ENCODE measurements at regions of chr18 and their contacts with region 1.

Region 1: GRCh38 chr18:3703732-3704176 is 253.8 kb downstream of the TGIF1 start:
- DNase-seq: peak; percentile 73 to 83
- ATAC-seq: peak; percentile 69
- H3K4me3 ChIP-seq: no peak overlapping the region
- H3K27ac ChIP-seq: no peak overlapping the region
- H3K4me1 ChIP-seq: no peaks in the 10 kb centered on the region
- H3K27me3 ChIP-seq: no peaks in the 10 kb centered on the region

Region 2: DNA sequence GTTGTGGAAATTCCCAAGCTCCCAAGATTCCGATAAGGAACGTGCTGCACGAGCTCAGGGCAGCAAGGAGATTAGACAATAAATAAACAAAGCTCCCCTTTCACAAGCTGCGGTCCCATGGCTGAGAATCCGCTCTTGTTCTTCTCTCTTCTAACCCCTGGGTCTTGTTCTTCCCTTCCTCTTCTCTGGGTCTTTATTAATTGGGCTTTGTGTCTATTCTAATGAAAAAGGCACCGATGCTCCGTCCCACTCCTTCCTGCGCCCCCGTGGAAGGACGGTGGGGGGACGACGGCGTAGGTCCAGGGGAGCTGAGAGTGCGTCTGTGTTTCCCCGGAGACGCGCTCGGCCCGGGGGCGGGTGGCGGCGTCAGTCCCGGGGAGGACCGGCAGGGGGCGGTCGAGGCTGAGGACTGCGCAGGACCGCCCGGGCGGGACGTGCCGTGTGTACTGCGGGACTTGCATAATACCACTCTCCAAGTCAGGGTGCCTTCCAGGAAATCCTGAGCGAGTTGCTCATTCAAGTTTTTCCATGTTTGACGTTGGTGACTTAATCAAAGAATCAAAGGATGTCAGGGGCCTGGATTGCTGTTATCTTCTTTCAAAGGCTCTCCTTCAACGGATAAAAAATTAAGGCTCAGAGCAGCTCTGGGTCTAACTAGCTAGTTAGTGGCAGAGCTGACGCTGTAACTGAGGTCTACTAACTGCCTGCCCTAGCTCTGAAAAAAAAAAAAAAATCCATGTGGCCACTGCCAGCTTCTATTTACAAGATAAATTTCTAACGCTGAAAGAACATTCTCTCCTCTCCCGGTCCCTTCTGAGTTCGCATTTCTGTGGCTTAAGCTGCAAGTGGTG is 67.6 kb after region 1 on chr18:
- intact Hi-C with region 1: loop called in 1 of 2 experiments (anchors 2 kb)
- DNase-seq: peak; percentile 90 to 96
- ATAC-seq: peak; percentile 100
- H3K4me3 ChIP-seq: peak overlapping the region; percentile 27 to 46
- H3K27ac ChIP-seq: peak overlapping the region in 1 of 2 donors; percentile 70
- H3K4me1 ChIP-seq: no peaks in the 10 kb centered on the region
- H3K27me3 ChIP-seq: no peaks in the 10 kb centered on the region

Region 3: GRCh38 chr18:3869848-3870247 is 166.1 kb after region 1 on chr18:
- intact Hi-C with region 1: loop called (anchors 5 kb)
- DNase-seq: no peak
- ATAC-seq: peak; percentile 61
- H3K4me3 ChIP-seq: no peak overlapping the region
- H3K27ac ChIP-seq: no peak overlapping the region
- H3K4me1 ChIP-seq: no peaks in the 10 kb centered on the region
- H3K27me3 ChIP-seq: no peaks in the 10 kb centered on the region

Region 4: GRCh38 chr18:3889803-3890202 is 186.0 kb after region 1 on chr18:
- intact Hi-C with region 1: no loop called
- DNase-seq: no peak
- ATAC-seq: no peak
- H3K4me3 ChIP-seq: no peak overlapping the region
- H3K27ac ChIP-seq: no peak overlapping the region
- H3K4me1 ChIP-seq: no peaks in the 10 kb centered on the region
- H3K27me3 ChIP-seq: no peaks in the 10 kb centered on the region

Region 5: DNA sequence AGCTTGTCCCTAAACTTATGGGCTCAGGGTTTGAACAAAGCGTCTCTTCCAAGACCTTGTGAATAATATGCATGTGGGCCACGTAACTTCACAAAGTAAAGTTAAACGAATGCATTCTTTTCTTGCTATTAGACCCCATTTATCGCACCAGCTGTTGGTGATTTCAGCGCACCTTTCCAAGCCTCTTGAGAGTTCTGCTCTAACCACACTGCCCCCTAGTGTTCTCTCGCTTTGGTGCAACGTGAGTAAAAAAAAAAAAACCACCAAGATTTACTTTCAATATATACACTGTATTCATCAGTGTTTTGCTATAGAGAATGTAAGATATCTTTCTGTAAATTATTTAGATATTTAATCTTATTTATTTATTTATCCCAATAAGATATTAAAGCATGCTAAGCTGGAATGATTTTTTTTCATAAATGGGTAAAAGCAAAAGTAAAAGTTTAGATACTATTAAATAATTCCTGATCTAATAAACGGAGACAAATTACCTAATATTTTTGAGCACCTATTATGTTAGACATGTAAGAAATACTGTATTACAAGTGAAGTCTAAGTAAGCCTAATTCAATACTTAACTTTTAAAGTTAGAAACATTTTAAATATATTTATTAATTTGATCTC is 291.8 kb after region 1 on chr18:
- intact Hi-C with region 1: loop called (anchors 5 to 10 kb)
- DNase-seq: peak in 1 of 2 donors; percentile 58
- ATAC-seq: no peak
- H3K4me3 ChIP-seq: peak overlapping the region; percentile 12 to 48
- H3K27ac ChIP-seq: no peak overlapping the region
- H3K4me1 ChIP-seq: no peaks in the 10 kb centered on the region
- H3K27me3 ChIP-seq: no peaks in the 10 kb centered on the region

Region 6: DNA sequence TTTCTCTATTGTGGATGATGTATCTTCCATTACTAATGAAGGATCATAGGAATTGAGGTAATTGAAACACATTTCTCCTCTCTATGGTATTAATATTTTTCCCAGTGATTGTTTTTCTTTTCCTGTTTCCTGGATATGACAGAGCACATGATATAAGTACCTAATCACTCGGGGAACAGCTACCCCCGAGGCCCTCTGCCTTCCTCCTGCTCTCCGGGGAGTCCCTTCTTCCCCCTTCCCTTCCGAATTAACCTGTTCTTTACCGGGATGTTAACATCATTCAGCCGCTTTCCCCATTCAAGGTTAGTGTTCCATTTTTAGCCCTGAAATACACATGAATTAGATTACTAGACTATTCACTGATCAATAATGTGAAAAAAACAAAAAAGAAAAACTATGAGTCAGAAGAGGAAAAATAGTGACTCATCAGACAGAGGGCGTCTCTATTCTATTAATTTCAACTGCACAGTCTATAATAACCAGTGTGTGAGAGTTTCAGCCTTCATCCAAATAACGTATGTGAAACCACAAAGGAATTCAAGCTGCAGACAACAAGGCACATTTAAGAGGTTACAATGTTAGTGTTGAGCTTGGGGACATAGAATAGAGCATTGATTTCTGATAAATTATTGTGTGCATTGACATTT is 300.6 kb after region 1 on chr18:
- intact Hi-C with region 1: loop called (anchors 5 to 10 kb)
- DNase-seq: no peak
- ATAC-seq: no peak
- H3K4me3 ChIP-seq: no peak overlapping the region
- H3K27ac ChIP-seq: no peak overlapping the region
- H3K4me1 ChIP-seq: peaks cover 0 to 3% of the 10 kb centered on the region in 2 donors
- H3K27me3 ChIP-seq: no peaks in the 10 kb centered on the region

Region 7: GRCh38 chr18:4017480-4017879 is 313.7 kb after region 1 on chr18:
- intact Hi-C with region 1: no loop called
- DNase-seq: no peak
- ATAC-seq: no peak
- H3K4me3 ChIP-seq: no peak overlapping the region
- H3K27ac ChIP-seq: no peak overlapping the region
- H3K4me1 ChIP-seq: no peaks in the 10 kb centered on the region
- H3K27me3 ChIP-seq: no peaks in the 10 kb centered on the region

Region 8: GRCh38 chr18:4068552-4069158 is 364.9 kb after region 1 on chr18:
- intact Hi-C with region 1: loop called in 1 of 2 experiments (anchors 10 kb)
- DNase-seq: no peak
- ATAC-seq: peak; percentile 81
- H3K4me3 ChIP-seq: no peak overlapping the region
- H3K27ac ChIP-seq: no peak overlapping the region
- H3K4me1 ChIP-seq: no peaks in the 10 kb centered on the region
- H3K27me3 ChIP-seq: no peaks in the 10 kb centered on the region